H1 (cell line): ENCODE measurements at regions of chr2 and their contacts with region 1.

Region 1: GRCh38 chr2:29309090-29310029 is 194.1 kb downstream of the CLIP4 start:
- DNase-seq: peak in 1 of 2 experiments; percentile 64
- H3K4me3 ChIP-seq: no peak overlapping the region
- H3K27ac ChIP-seq: no peak overlapping the region
- H3K4me1 ChIP-seq: peaks cover 0 to 7% (median under 1%) of the 10 kb centered on the region in 4 experiments; a peak in 2 of 7 replicates
- H3K27me3 ChIP-seq: no peaks in the 10 kb centered on the region
- CTCF ChIP-seq: peak; percentile 43 to 85 (median 67)
- EP300 ChIP-seq: no peak
- POLR2A ChIP-seq: no peak
- RAD21 ChIP-seq: peak; percentile 59 to 70

Region 2: DNA sequence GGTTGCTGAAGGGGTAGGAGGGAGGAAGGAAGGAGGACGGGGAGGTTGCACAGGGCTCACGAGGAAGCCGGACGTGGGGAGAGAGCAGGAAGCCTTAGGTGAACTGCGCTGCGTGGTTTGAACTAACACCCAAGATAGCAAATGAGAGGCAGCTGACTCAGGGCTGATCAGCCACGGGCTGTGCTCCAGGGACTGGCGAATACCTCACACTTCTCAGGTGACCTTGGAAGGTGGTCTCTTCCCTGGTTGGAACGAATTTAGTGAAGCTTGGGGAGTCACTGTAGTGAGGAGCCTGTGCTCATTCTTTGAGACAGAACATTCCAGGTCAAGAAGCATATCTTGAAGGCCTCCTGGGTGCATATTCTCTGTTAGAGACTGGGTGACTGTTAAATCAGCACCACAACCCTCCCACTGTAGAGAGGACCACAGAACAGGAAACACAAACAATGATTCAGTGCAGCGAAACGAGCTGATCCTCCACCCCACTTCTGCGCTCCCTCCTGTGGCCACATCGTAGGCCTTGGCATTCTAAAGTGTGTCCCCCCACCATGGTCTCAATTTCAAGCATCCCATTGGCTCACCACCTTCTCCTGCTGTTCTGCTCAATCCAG is 294.4 kb before region 1 on chr2:
- CTCF ChIA-PET with region 1: no interaction called
- POLR2A ChIA-PET with region 1: no interaction called
- DNase-seq: no peak
- H3K4me3 ChIP-seq: no peak overlapping the region
- H3K27ac ChIP-seq: no peak overlapping the region
- H3K4me1 ChIP-seq: peaks cover 0 to 20% (median 8%) of the 10 kb centered on the region in 4 experiments; a peak in 5 of 7 replicates
- H3K27me3 ChIP-seq: no peaks in the 10 kb centered on the region; a peak in 1 of 7 replicates
- CTCF ChIP-seq: no peak
- EP300 ChIP-seq: no peak
- POLR2A ChIP-seq: no peak
- RAD21 ChIP-seq: no peak

Region 3: GRCh38 chr2:29238497-29238896 is 70.9 kb before region 1 on chr2:
- CTCF ChIA-PET with region 1: interaction called, 15 read pairs
- POLR2A ChIA-PET with region 1: no interaction called
- DNase-seq: peak; percentile 13 to 71
- H3K4me3 ChIP-seq: no peak overlapping the region
- H3K27ac ChIP-seq: no peak overlapping the region
- H3K4me1 ChIP-seq: no peaks in the 10 kb centered on the region
- H3K27me3 ChIP-seq: no peaks in the 10 kb centered on the region
- CTCF ChIP-seq: peak; percentile 80 to 99 (median 94)
- EP300 ChIP-seq: no peak
- POLR2A ChIP-seq: no peak
- RAD21 ChIP-seq: peak; percentile 84 to 86

Region 4: DNA sequence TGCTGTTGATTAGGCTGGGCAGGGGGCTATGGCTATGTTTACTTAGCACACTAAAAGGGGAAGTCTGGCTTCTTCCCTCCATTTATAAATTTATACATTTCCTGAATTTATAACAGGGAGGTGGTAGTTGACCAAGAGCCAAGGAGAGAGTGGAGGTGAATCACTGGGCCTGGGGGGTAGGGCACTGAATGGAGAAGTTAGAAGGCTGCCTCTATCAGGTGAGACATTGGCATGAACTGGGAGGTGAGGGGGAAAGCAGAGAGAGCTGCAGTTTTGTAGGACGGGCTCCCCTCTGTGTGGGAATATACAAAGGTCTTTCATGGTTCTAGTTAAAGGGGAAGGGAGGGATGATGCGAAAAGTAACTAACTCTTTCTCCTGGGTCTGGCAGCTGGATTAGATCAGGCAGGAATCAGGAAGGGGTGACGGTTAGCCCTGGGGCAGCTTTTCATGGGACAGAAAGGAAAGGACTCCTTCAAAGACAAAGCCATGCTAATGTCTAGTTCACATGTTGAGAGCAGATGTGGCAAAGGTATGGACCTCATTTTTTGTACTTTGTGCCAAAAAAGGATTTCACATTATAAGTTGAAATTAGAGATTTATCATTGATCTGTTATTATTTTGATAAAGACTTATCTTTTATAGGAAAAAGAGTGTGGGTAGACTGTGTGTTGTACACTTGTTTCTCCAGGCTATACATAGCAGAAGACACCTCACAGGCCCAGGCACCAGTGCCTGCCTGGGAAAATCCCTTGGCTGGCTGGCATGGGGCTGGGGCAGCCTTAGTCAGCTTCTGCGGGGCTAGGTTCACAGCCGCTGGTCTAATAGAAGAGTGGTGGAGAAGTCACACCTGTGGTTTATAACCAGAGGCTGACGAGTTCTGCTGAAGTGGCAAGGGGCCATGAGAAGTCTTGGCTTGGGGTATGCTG is 35.4 kb before region 1 on chr2:
- CTCF ChIA-PET with region 1: interaction called, 23 read pairs
- POLR2A ChIA-PET with region 1: no interaction called
- DNase-seq: no peak
- H3K4me3 ChIP-seq: no peak overlapping the region
- H3K27ac ChIP-seq: no peak overlapping the region
- H3K4me1 ChIP-seq: peaks cover 0 to 5% (median 0%) of the 10 kb centered on the region in 4 experiments; a peak in 3 of 7 replicates
- H3K27me3 ChIP-seq: no peaks in the 10 kb centered on the region
- CTCF ChIP-seq: no peak
- EP300 ChIP-seq: no peak
- POLR2A ChIP-seq: no peak
- RAD21 ChIP-seq: no peak

Region 5: DNA sequence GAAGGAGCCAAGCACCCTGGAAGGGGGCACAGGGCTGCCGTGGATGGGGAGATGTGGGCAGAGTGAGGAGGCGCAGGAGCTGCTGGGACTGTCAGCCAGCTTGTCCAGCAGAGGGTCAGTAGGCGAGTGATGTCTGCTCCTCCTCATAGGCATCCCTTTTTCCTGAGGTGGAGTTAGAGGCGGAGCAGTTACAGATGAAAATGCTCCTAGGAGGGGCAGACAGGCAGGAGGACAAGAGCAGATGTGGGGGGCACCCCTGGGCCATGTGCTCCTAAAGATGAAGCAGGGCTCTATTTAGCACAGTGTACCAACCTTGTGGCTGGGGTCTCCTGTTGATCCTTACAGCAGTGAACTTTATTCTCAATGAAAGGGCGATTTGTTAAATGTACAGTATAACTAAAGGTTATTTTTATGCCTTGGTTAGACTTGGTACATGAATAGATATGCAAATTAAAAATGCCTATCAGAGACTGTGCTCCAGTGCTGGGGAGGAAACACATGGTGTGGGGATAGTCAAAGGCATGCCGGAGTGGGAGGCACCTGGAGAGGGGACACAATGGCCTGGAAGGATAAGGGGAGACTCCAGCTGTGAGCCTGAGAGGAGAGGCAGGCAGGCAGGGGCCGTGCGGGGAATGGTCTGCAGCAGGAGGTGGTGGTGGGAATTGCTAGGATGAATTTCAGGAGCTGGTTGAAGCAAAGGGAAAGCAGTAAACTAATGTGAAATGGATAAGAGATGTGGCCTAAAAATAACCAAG is 18.9 kb before region 1 on chr2:
- CTCF ChIA-PET with region 1: interaction called, 61 read pairs
- POLR2A ChIA-PET with region 1: no interaction called
- DNase-seq: peak in 1 of 2 experiments; percentile 63
- H3K4me3 ChIP-seq: no peak overlapping the region
- H3K27ac ChIP-seq: no peak overlapping the region
- H3K4me1 ChIP-seq: peaks cover 0 to 8% (median 2%) of the 10 kb centered on the region in 4 experiments; a peak in 5 of 7 replicates
- H3K27me3 ChIP-seq: no peaks in the 10 kb centered on the region
- CTCF ChIP-seq: no peak
- EP300 ChIP-seq: no peak
- POLR2A ChIP-seq: no peak
- RAD21 ChIP-seq: no peak

Region 6: DNA sequence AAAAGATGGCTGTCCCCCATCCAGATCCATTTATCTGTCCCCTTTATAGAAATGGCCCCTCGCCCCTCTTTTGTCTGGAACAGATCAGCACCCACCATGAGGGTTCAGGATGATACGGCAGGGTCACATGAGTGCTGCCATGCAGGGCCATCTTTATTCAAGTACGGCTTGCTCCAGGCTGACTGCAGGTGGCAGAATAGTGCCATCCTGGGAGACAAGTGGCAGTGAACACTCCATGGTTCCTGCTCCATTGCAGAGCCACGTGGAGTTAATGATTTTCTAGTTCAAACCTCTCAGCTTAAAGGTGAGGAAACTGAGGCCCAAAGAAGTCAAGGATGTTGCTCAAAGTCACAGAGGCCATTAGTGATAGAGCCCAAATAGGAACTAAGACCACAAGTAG is 13.5 kb before region 1 on chr2:
- CTCF ChIA-PET with region 1: interaction called, 61 read pairs
- POLR2A ChIA-PET with region 1: no interaction called
- DNase-seq: no peak
- H3K4me3 ChIP-seq: no peak overlapping the region
- H3K27ac ChIP-seq: no peak overlapping the region
- H3K4me1 ChIP-seq: no peaks in the 10 kb centered on the region
- H3K27me3 ChIP-seq: no peaks in the 10 kb centered on the region
- CTCF ChIP-seq: peak; percentile 58 to 65 (median 61)
- EP300 ChIP-seq: no peak
- POLR2A ChIP-seq: no peak
- RAD21 ChIP-seq: peak; percentile 71 to 80

Region 7: GRCh38 chr2:29336391-29337241 is 27.3 kb after region 1 on chr2:
- CTCF ChIA-PET with region 1: interaction called, 11 read pairs
- POLR2A ChIA-PET with region 1: no interaction called
- DNase-seq: no peak
- H3K4me3 ChIP-seq: no peak overlapping the region
- H3K27ac ChIP-seq: no peak overlapping the region
- H3K4me1 ChIP-seq: no peaks in the 10 kb centered on the region; a peak in 1 of 7 replicates
- H3K27me3 ChIP-seq: no peaks in the 10 kb centered on the region
- CTCF ChIP-seq: no peak
- EP300 ChIP-seq: no peak
- POLR2A ChIP-seq: no peak
- RAD21 ChIP-seq: no peak

Region 8: GRCh38 chr2:29372185-29372584 is 62.8 kb after region 1 on chr2:
- CTCF ChIA-PET with region 1: no interaction called
- POLR2A ChIA-PET with region 1: no interaction called
- DNase-seq: no peak
- H3K4me3 ChIP-seq: no peak overlapping the region
- H3K27ac ChIP-seq: no peak overlapping the region
- H3K4me1 ChIP-seq: peaks cover 0 to 11% (median 4%) of the 10 kb centered on the region in 4 experiments; a peak in 6 of 7 replicates
- H3K27me3 ChIP-seq: no peaks in the 10 kb centered on the region
- CTCF ChIP-seq: no peak
- EP300 ChIP-seq: no peak
- POLR2A ChIP-seq: no peak
- RAD21 ChIP-seq: no peak

Region 9: GRCh38 chr2:29463181-29463900 is 154.0 kb after region 1 on chr2:
- CTCF ChIA-PET with region 1: no interaction called
- POLR2A ChIA-PET with region 1: no interaction called
- DNase-seq: no peak
- H3K4me3 ChIP-seq: no peak overlapping the region
- H3K27ac ChIP-seq: no peak overlapping the region
- H3K4me1 ChIP-seq: 0 out of 7 replicates have a peak, but pooled peaks cover 0 to 3% (median 0%) of the 10 kb centered on the region in 4 experiments
- H3K27me3 ChIP-seq: no peaks in the 10 kb centered on the region
- CTCF ChIP-seq: no peak
- EP300 ChIP-seq: no peak
- POLR2A ChIP-seq: no peak
- RAD21 ChIP-seq: no peak

Region 10: DNA sequence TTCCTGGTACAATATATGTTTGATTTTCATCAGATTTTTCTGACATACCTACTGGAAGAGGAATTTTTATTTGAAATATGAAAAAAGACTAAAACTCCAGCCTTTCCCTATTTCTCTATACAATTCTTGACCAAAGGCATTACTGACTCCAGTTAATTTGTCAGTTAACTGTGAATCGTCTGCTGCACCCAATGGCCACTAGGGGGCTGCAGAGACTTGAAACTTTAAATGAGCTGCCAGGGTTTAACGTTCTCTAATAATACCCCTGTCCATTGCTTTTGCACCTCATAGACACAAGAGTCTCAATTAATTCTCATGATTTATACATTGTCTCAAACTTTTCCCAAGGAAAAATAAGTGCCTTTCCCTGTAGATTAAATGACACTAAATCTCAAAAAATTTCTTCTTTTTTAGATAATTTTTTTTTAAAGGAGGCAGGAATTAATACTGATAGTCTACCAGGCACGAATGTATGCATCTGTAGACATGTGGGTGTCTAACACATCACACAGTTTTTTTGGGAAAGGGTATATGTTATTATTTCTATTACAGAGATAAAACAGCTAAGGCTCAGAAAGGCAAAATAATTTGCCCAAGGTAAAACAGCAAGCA is 613.9 kb after region 1 on chr2:
- CTCF ChIA-PET with region 1: interaction called, 12 read pairs
- POLR2A ChIA-PET with region 1: no interaction called
- DNase-seq: peak in 1 of 2 experiments; percentile 58
- H3K4me3 ChIP-seq: no peak overlapping the region
- H3K27ac ChIP-seq: no peak overlapping the region
- H3K4me1 ChIP-seq: peaks cover 3 to 18% (median 6%) of the 10 kb centered on the region in 4 experiments; a peak in 6 of 7 replicates
- H3K27me3 ChIP-seq: peaks cover 20 to 31% (median 30%) of the 10 kb centered on the region in 4 experiments
- CTCF ChIP-seq: peak in 2 of 3 experiments; percentile 79 to 90; a peak in 3 of 4 replicates
- EP300 ChIP-seq: no peak
- POLR2A ChIP-seq: no peak
- RAD21 ChIP-seq: peak; percentile 87 to 92